ENCODE measurements at regions of chr11 and their contacts with region 1.

Region 1: GRCh38 chr11:94504689-94505293 is 7.5 kb upstream of the C11orf97 start:
- DNase-seq: peak; percentile 75
- H3K4me3 ChIP-seq: no peak overlapping the region
- H3K27ac ChIP-seq: no peak overlapping the region
- H3K4me1 ChIP-seq: no peaks in the 10 kb centered on the region
- H3K27me3 ChIP-seq: no peaks in the 10 kb centered on the region
- CTCF ChIP-seq: peak; percentile 88

Region 2: DNA sequence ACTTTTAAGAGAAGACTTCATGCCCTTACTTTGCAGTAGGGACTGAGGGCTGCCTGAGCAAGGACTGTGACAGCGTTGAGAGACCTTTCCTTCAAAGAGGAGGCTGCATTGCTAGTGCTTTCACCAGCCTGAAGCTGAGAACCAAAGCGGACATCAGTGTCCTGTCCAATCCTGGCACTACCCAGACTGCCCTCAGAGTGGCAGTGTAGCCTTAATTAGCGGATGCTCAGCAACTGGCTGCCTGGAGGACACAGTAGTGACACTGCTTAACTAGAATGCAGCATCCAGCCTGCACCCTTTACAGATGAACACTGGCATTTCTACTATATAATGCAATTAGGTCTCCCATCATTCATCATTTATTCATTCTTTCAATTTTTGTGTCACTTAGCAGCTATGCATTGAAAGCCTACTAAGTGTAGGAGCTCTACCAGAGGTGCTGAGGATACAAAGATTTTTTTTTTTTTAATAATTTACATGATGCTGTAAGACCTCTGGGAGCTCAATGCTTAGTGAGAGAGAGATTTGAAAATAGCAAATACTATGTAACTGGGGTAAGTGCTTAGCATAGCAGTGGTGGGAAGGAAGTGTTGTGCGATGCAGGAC is 1270.1 kb before region 1 on chr11:
- CTCF ChIA-PET with region 1: no interaction called
- POLR2A ChIA-PET with region 1: no interaction called
- intact Hi-C with region 1: loop called (anchors 10 kb)
- DNase-seq: peak; percentile 84
- H3K4me3 ChIP-seq: no peak overlapping the region
- H3K27ac ChIP-seq: no peak overlapping the region
- H3K4me1 ChIP-seq: no peaks in the 10 kb centered on the region
- H3K27me3 ChIP-seq: peaks cover 16% of the 10 kb centered on the region
- CTCF ChIP-seq: peak; percentile 93

Region 3: DNA sequence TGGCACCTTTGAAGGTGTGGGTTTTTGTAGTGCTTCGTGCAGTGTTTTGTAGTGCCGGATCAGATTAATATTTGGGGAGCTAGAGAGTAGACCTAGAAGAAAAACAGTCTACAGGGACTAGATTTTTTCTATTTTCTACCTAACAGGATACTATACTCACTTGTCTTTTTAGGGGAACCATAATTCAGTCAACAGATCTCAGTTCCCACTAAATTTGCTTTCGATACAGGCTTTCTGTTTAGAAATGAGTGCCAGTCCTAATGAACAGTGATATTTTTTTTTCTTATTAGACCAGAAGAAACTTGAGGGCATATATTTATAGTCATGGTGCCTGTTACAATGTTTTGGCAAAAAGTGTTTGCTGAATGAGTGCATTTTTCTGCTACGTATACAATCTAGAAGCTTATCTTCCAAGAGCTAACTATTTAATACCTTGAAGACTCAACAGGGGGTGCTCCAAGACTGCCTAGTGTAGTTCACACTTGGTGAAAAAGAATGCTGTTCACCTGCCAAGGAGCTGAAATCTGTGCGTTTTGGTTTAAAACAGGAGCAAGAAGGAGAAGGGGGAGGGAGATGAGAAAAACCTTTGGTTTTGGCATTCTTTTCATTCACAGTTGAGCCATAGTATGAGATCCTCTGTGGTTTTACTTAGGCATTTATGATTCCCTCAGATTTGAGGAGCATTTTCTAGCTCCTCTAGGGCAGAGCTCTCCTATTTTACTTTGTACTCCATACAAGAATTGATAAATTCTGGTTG is 609.5 kb before region 1 on chr11:
- CTCF ChIA-PET with region 1: interaction called, 6 read pairs
- POLR2A ChIA-PET with region 1: no interaction called
- intact Hi-C with region 1: loop called (anchors 5 kb)
- DNase-seq: peak; percentile 70
- H3K4me3 ChIP-seq: no peak overlapping the region
- H3K27ac ChIP-seq: no peak overlapping the region
- H3K4me1 ChIP-seq: no peaks in the 10 kb centered on the region
- H3K27me3 ChIP-seq: peaks cover 21% of the 10 kb centered on the region
- CTCF ChIP-seq: peak; percentile 72

Region 4: GRCh38 chr11:93921695-93922468 is 582.9 kb before region 1 on chr11:
- CTCF ChIA-PET with region 1: interaction called, 6 read pairs
- POLR2A ChIA-PET with region 1: no interaction called
- intact Hi-C with region 1: loop called (anchors 1 kb)
- DNase-seq: peak; percentile 83
- H3K4me3 ChIP-seq: no peak overlapping the region
- H3K27ac ChIP-seq: no peak overlapping the region
- H3K4me1 ChIP-seq: no peaks in the 10 kb centered on the region
- H3K27me3 ChIP-seq: peaks cover 27% of the 10 kb centered on the region
- CTCF ChIP-seq: peak; percentile 86

Region 5: DNA sequence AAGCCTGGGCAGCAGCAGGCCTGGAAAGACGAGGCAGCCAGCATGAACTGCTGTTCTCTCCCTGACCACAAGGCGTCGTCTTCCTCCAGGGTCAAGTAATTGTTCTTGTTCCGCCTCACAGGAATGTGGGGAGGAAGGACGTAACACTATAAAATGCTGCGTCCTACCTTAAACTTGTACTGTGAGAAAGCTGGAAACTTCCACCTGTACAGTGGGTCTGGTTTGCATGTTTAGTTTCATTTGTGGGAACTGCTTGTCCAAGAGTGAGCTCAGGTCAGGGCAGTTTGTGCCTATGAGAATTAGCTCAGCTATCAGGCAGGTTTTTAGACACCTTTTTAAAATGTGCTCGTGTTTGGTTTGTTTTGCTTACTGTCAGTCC is 320.9 kb before region 1 on chr11:
- CTCF ChIA-PET with region 1: no interaction called
- POLR2A ChIA-PET with region 1: no interaction called
- intact Hi-C with region 1: loop called (anchors 1 kb)
- DNase-seq: peak; percentile 60
- H3K4me3 ChIP-seq: no peak overlapping the region
- H3K27ac ChIP-seq: no peak overlapping the region
- H3K4me1 ChIP-seq: peaks cover 16% of the 10 kb centered on the region
- H3K27me3 ChIP-seq: no peaks in the 10 kb centered on the region
- CTCF ChIP-seq: peak; percentile 88

Region 6: GRCh38 chr11:94325681-94326080 is 179.1 kb before region 1 on chr11:
- CTCF ChIA-PET with region 1: no interaction called
- POLR2A ChIA-PET with region 1: no interaction called
- intact Hi-C with region 1: loop called (anchors 5 kb)
- DNase-seq: peak; percentile 64
- H3K4me3 ChIP-seq: no peak overlapping the region
- H3K27ac ChIP-seq: no peak overlapping the region
- H3K4me1 ChIP-seq: no peaks in the 10 kb centered on the region
- H3K27me3 ChIP-seq: peaks cover 10% of the 10 kb centered on the region
- CTCF ChIP-seq: peak; percentile 76